Activated CD4-positive, alpha-beta memory T cell treated with anti-CD3 and anti-CD28 coated beads for 36 hours (primary cell): ENCODE measurements at regions of chr2 and their contacts with region 1.

Region 1: GRCh38 chr2:230411570-230412370 is 4.2 kb upstream of the SP100 start:
- DNase-seq: peak; percentile 75
- H3K4me3 Mint-ChIP-seq: peak overlapping the region; percentile 87
- H3K27ac Mint-ChIP-seq: peak overlapping the region; percentile 88
- H3K4me1 Mint-ChIP-seq: peaks cover 51% of the 10 kb centered on the region
- H3K27me3 Mint-ChIP-seq: no peaks in the 10 kb centered on the region

Region 2: DNA sequence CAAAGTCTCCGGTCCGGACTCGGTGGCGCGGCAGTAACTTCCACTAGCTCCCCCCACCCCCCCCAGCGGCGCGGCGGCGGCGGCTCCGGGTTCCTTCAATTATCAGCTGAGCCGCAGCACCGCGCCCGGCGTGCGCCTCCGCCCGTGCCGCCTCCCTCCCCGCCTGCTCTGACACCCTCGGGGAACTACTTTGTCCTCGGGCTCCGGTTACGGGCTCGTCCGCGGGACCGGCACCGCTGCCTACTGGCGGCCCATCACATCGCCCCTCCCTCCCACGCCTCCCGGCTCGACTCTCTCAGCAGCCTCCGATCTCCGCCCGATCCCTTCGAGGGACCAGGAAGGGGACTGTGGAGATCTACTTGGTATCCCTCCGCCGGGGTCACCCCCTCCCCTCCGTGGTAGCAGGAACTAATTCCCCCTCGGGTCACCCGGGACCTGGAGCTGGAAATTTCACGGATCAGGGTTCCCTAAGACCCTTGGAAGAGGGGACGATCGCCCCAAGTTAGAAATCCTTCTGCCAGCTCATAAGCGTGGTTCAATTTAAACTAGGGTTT is 489.8 kb before region 1 on chr2 and contains the start of gene TRIP12:
- CTCF ChIA-PET with region 1: no interaction called
- POLR2A ChIA-PET with region 1: no interaction called
- intact Hi-C with region 1: loop called (anchors 5 kb)
- DNase-seq: peak; percentile 91
- H3K4me3 Mint-ChIP-seq: peak within 1 kb of the TSS; percentile 95
- H3K27ac Mint-ChIP-seq: peak within 1 kb of the TSS; percentile 99
- H3K4me1 Mint-ChIP-seq: peaks cover 29% of the 10 kb centered on the region
- H3K27me3 Mint-ChIP-seq: no peaks in the 10 kb centered on the region
- total RNA-seq, gene TRIP12: 226 to 253 TPM

Region 3: DNA sequence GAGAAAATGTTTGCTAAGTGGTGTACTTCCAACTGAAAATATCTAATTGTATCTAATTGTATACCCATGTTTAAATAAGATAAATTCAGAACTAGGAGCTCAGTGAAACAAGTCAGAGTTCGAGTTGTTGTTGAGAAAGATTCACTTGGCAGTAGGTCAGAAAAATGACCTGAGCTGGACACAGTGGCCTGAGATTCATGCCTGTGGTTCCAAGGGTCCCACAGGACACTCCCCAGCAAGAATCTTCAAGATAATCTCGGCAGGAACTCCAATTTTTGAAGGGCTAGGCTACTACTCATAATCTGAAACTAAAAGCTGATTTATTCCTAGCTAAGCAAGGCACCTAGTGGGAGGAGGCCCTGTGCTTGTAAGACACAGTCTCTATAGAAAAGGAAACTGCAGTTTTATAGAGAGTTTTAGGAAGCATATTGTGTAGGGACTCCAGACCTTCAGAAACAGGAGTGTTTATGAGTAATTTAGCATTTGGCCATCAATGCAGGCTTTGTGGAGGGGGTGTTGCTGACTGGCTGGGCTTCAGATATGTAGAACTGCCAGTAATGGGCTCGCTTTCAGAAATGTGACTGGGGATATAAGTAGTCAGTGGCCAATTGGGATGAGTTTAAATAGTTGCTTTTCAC is 143.0 kb before region 1 on chr2:
- CTCF ChIA-PET with region 1: no interaction called
- POLR2A ChIA-PET with region 1: no interaction called
- intact Hi-C with region 1: loop called (anchors 5 kb)
- DNase-seq: peak; percentile 32
- H3K4me3 Mint-ChIP-seq: no peak overlapping the region
- H3K27ac Mint-ChIP-seq: peak overlapping the region; percentile 59
- H3K4me1 Mint-ChIP-seq: peaks cover 52% of the 10 kb centered on the region
- H3K27me3 Mint-ChIP-seq: no peaks in the 10 kb centered on the region

Region 4: GRCh38 chr2:230326453-230327417 is 85.0 kb before region 1 on chr2 and contains the start of gene SP140L:
- CTCF ChIA-PET with region 1: interaction called, 8 read pairs
- POLR2A ChIA-PET with region 1: interaction called, 4 read pairs
- intact Hi-C with region 1: loop called (anchors 2 kb)
- DNase-seq: peak; percentile 87
- H3K4me3 Mint-ChIP-seq: peak within 1 kb of the TSS; percentile 88
- H3K27ac Mint-ChIP-seq: peak within 1 kb of the TSS; percentile 94
- H3K4me1 Mint-ChIP-seq: peaks cover 56% of the 10 kb centered on the region
- H3K27me3 Mint-ChIP-seq: no peaks in the 10 kb centered on the region
- total RNA-seq, gene SP140L: 41.9 to 44.1 TPM

Region 5: GRCh38 chr2:230441227-230441897 is 29.6 kb after region 1 on chr2:
- CTCF ChIA-PET with region 1: no interaction called
- POLR2A ChIA-PET with region 1: no interaction called
- intact Hi-C with region 1: loop called (anchors 2 kb)
- DNase-seq: peak; percentile 71
- H3K4me3 Mint-ChIP-seq: peak overlapping the region; percentile 3
- H3K27ac Mint-ChIP-seq: peak overlapping the region; percentile 77
- H3K4me1 Mint-ChIP-seq: peaks cover 52% of the 10 kb centered on the region
- H3K27me3 Mint-ChIP-seq: no peaks in the 10 kb centered on the region

Region 6: DNA sequence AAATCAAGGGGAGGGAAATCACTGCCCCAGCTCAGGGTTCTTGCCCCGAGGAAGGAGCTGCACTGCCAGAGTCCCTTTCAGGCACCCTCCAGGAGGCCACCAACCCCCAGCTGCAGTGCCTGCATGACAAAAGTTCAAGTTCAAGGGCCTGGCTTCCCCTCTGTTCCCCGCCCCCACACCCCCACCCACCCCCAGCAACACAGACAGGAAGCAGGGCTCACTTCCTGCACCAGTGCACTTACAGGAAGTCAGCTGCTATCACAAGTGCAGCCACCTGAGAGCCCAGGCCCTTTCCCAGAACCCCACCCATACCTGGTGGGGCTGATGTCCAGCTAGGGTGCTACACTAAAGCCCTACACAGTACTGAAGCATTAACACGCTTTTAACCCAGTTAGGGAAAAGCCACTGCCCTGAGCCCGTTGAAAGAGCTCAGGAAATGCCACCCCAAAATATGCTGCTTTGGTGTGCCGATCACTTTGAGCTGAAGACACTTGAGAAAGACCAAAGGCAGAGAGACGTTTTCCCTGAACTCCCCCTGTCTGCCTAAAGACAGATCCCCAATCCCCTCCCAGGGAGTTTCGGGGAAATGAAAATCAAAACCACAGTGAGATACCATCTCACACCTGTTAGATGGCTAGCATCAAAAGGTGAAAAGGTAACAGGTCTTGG is 190.9 kb after region 1 on chr2:
- CTCF ChIA-PET with region 1: no interaction called
- POLR2A ChIA-PET with region 1: no interaction called
- intact Hi-C with region 1: loop called (anchors 5 kb)
- DNase-seq: peak; percentile 75
- H3K4me3 Mint-ChIP-seq: peak overlapping the region; percentile 31
- H3K27ac Mint-ChIP-seq: peak overlapping the region; percentile 89
- H3K4me1 Mint-ChIP-seq: peaks cover 56% of the 10 kb centered on the region
- H3K27me3 Mint-ChIP-seq: no peaks in the 10 kb centered on the region

Region 7: DNA sequence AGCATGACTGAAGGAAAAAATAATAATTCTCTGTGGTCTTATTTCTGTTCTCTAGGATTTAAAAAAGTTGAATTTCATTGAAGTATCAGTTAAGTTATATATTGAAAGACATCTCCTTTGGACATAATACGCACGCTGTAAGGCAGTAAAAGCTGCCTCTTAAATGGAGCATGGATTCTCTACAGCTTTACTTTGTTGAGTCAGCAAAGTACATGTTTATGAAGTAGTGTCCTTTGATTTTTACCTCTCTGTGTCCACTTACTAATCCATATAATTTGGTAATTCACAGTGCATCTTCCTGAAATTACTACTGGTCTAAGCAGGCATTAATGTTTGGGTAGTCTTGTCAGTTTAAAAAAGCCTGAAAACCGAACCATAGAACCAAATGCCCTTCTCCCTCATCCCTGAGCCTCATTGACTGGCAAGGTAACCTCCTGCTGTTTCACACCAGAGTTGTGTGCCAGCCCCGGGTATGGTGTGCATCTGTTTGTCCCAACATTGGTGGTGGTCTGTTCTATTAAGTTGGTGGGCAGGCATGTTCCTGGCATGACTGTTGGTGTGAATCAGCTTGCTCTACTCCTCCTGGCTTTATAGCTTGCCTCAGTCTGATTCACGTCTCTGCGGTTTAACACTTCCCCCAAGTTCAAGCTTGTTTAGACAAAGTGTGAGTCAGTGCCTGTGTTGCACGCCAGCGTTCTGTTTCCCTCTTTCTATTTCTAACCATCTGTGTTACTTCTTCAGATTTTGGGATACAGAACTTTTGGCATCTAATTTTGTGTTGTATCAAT is 382.0 kb after region 1 on chr2:
- CTCF ChIA-PET with region 1: no interaction called
- POLR2A ChIA-PET with region 1: no interaction called
- intact Hi-C with region 1: loop called (anchors 5 kb)
- DNase-seq: peak; percentile 87
- H3K4me3 Mint-ChIP-seq: peak overlapping the region; percentile 62
- H3K27ac Mint-ChIP-seq: no peak overlapping the region
- H3K4me1 Mint-ChIP-seq: peaks cover 55% of the 10 kb centered on the region
- H3K27me3 Mint-ChIP-seq: no peaks in the 10 kb centered on the region